Naive thymus-derived CD4-positive, alpha-beta T cell (primary cell): ENCODE measurements at regions of chr12 and their contacts with region 1.

Region 1: GRCh38 chr12:29088611-29089219 is 60.4 kb upstream of the FAR2 start:
- DNase-seq: peak in 4 of 9 donors; percentile 26 to 36 (median 29)
- ATAC-seq: peak; percentile 49
- H3K4me3 ChIP-seq: no peak overlapping the region
- H3K4me3 Mint-ChIP-seq: no peak overlapping the region
- H3K27ac ChIP-seq: no peak overlapping the region
- H3K27ac Mint-ChIP-seq: no peak overlapping the region
- H3K4me1 ChIP-seq: no peaks in the 10 kb centered on the region
- H3K4me1 Mint-ChIP-seq: peaks cover 0 to 5% (median 3%) of the 10 kb centered on the region in 7 donors
- H3K27me3 ChIP-seq: no peaks in the 10 kb centered on the region
- H3K27me3 Mint-ChIP-seq: peaks cover 0 to 45% (median 0%) of the 10 kb centered on the region in 5 donors

Region 2: DNA sequence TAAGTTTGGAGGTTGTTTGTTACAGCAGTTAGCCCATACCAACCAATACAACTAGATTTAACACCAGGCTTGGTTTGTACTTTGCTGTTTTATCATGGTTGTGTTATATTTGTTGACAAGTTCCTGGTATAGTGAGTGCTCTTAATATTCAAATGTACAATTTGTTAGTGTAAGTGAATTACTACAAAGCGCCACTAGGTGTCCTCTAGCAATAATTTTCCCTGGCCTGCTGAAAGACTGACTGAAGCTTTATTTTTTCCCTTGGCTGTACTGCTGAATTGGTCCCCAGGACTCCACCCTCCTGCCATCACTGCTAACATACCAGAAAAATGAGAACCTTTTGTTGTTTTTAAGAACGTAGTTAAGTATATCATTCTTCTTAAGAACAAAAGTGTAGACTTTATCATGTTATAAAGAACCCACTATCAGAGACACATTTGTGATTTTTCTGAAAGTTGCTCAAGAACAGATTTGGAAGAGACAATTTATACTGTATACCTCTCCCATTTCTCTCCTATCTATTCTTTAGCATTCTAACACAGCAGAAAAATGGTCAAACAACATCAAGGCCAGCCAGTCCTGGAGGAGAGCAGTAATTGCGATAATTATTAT is 15.0 kb before region 1 on chr12:
- CTCF ChIA-PET with region 1: interaction called, 11 read pairs
- POLR2A ChIA-PET with region 1: no interaction called
- intact Hi-C with region 1: no loop called
- DNase-seq: peak in 6 of 9 donors; percentile 7 to 47 (median 34)
- ATAC-seq: peak; percentile 73
- H3K4me3 ChIP-seq: no peak overlapping the region
- H3K4me3 Mint-ChIP-seq: no peak overlapping the region
- H3K27ac ChIP-seq: no peak overlapping the region
- H3K27ac Mint-ChIP-seq: peak overlapping the region in 2 of 9 donors; percentile 26 to 65
- H3K4me1 ChIP-seq: no peaks in the 10 kb centered on the region
- H3K4me1 Mint-ChIP-seq: no peaks in the 10 kb centered on the region
- H3K27me3 ChIP-seq: no peaks in the 10 kb centered on the region
- H3K27me3 Mint-ChIP-seq: peaks cover 12 to 45% (median 23%) of the 10 kb centered on the region in 5 donors

Region 3: DNA sequence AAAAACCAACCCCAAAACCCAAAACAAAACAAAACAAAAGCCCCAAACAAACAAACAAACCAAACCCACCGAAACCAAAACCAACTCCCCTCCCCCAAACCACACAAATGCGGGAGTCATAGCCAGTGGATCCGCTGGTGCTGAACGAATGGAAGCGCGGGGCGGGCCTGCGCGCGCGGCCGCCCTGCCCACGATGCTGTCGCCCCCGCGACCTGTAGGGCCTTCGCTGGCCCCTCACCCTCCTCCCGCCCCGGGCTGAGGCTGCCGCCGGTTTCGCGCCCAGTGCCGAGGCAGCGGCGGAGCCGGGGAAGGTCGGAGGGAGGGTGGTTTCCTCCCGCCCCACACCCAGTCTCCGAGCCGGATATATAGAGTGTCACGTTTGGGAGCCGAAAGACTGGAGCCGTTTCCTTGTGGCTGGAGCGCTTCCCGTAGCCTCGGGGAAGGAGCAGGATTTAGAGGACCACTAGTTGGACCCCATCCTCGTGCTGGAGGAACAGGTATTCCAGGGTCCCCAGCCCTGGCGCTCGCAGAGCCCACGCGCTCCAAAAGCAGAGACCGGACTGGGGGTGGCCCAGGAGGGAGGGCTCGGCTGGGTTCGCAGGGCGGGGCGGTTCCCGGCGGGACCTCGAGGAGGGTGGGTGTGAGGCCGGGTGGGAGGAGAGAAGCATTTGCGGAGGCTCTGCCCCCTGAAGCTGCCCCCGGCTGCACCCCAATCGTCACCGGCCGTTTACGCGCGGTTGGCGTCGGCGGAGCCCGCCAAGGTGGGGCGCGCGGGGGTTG is 60.4 kb after region 1 on chr12 and contains the start of gene FAR2:
- CTCF ChIA-PET with region 1: no interaction called
- POLR2A ChIA-PET with region 1: no interaction called
- intact Hi-C with region 1: loop called in 1 of 2 experiments (anchors 1 kb)
- DNase-seq: peak; percentile 20 to 58 (median 33)
- ATAC-seq: peak; percentile 78
- H3K4me3 ChIP-seq: peak within 1 kb of the TSS; percentile 88
- H3K4me3 Mint-ChIP-seq: peak within 1 kb of the TSS; percentile 87 to 96 (median 92)
- H3K27ac ChIP-seq: peak within 1 kb of the TSS; percentile 37
- H3K27ac Mint-ChIP-seq: peak within 1 kb of the TSS; percentile 36 to 94 (median 74)
- H3K4me1 ChIP-seq: peaks cover 0 to 6% of the 10 kb centered on the region in 2 donors
- H3K4me1 Mint-ChIP-seq: peaks cover 14 to 31% (median 27%) of the 10 kb centered on the region in 7 donors
- H3K27me3 ChIP-seq: no peaks in the 10 kb centered on the region
- H3K27me3 Mint-ChIP-seq: peaks cover 0 to 64% (median 10%) of the 10 kb centered on the region in 5 donors
- total RNA-seq, gene FAR2: 1.1 to 11.1 (median 3.0) TPM

Region 4: GRCh38 chr12:29226616-29227015 is 137.9 kb after region 1 on chr12:
- CTCF ChIA-PET with region 1: no interaction called
- POLR2A ChIA-PET with region 1: no interaction called
- intact Hi-C with region 1: loop called in 1 of 2 experiments (anchors 10 kb)
- DNase-seq: no peak
- ATAC-seq: no peak
- H3K4me3 ChIP-seq: no peak overlapping the region
- H3K4me3 Mint-ChIP-seq: no peak overlapping the region
- H3K27ac ChIP-seq: no peak overlapping the region
- H3K27ac Mint-ChIP-seq: no peak overlapping the region
- H3K4me1 ChIP-seq: no peaks in the 10 kb centered on the region
- H3K4me1 Mint-ChIP-seq: no peaks in the 10 kb centered on the region
- H3K27me3 ChIP-seq: no peaks in the 10 kb centered on the region
- H3K27me3 Mint-ChIP-seq: peaks cover 0 to 3% (median 0%) of the 10 kb centered on the region in 5 donors

Region 5: GRCh38 chr12:29317556-29318363 is 229.0 kb after region 1 on chr12:
- CTCF ChIA-PET with region 1: interaction called, 42 read pairs
- POLR2A ChIA-PET with region 1: no interaction called
- intact Hi-C with region 1: loop called (anchors 1 kb)
- DNase-seq: peak in 8 of 9 donors; percentile 22 to 73 (median 55)
- ATAC-seq: peak; percentile 100
- H3K4me3 ChIP-seq: no peak overlapping the region
- H3K4me3 Mint-ChIP-seq: no peak overlapping the region
- H3K27ac ChIP-seq: no peak overlapping the region
- H3K27ac Mint-ChIP-seq: peak overlapping the region in 1 of 9 donors; percentile 6
- H3K4me1 ChIP-seq: no peaks in the 10 kb centered on the region
- H3K4me1 Mint-ChIP-seq: peaks cover 2 to 10% (median 8%) of the 10 kb centered on the region in 7 donors
- H3K27me3 ChIP-seq: no peaks in the 10 kb centered on the region
- H3K27me3 Mint-ChIP-seq: no peaks in the 10 kb centered on the region